GM12878 (cell line): ENCODE measurements at regions of chr5 and their contacts with region 1.

Region 1: GRCh38 chr5:10607666-10608073 is 43.8 kb downstream of the ANKRD33B start:
- DNase-seq: peak; percentile 63
- ATAC-seq: peak; percentile 73
- H3K4me3 ChIP-seq: peak overlapping the region; percentile 16
- H3K27ac ChIP-seq: peak overlapping the region; percentile 87
- H3K4me1 ChIP-seq: peaks cover 56% of the 10 kb centered on the region
- H3K27me3 ChIP-seq: no peaks in the 10 kb centered on the region
- CTCF ChIP-seq: peak; percentile 32 to 52 (median 32); a peak in 4 of 6 replicates
- EP300 ChIP-seq: peak; percentile 58 to 63; a peak in 2 of 4 replicates
- POLR2A ChIP-seq: no peak
- RAD21 ChIP-seq: peak; percentile 51

Region 2: DNA sequence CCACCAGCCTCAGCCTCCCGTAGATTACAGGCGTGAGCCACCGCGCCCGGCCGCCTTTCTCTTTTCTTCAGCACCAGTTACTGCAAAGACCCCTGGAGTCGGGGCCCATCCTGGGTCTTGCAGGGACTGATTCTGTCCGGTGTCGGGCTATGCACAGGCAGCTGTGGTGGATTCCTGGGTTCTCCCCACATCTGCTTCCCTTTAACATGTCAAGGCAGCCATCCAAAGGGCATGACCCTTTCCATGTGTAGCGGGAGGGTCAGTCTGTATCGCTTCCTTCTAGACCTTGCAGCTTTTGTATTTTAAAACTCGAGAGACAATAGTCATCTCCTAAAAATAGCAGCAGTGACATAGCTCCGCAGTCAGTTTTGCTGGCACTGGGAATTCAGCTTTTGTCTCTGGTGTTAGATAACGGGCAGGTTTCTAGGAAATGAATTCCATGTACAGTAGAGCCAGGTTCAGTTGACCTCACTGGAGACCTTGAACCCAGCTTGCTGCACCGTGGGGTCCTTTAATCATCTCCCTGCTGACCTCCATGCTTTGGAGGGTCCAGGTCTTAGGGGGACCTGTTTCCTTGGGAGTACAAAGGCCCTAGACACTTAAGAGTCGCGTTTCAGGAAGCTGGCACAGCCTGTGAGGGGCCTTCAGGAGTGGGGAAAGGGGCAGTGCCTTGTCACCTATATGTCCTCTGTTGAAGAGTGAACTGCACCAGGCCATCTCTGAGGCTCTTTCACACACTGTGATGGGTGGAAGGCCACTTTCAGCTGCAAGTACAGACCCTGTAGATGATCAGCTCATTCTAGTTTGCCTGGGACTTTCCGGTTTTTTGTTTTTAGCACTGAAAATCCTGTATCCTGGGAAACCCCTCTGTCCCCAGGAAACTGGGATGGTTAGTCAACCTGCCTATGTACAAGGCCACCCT is 30.0 kb before region 1 on chr5:
- CTCF ChIA-PET with region 1: interaction called, 25 read pairs
- POLR2A ChIA-PET with region 1: interaction called, 10 read pairs
- RAD21 ChIA-PET with region 1: interaction called, 46 read pairs
- SMC1A ChIA-PET with region 1: interaction called, 25 read pairs
- in situ Hi-C with region 1: no loop called
- intact Hi-C with region 1: loop called (anchors 1 kb)
- DNase-seq: no peak
- ATAC-seq: peak; percentile 68
- H3K4me3 ChIP-seq: peak overlapping the region; percentile 46; the same call in 1 of the 2 replicates
- H3K27ac ChIP-seq: peak overlapping the region; percentile 77
- H3K4me1 ChIP-seq: peaks cover 64% of the 10 kb centered on the region
- H3K27me3 ChIP-seq: no peaks in the 10 kb centered on the region
- CTCF ChIP-seq: no peak
- EP300 ChIP-seq: no peak
- POLR2A ChIP-seq: no peak; the same call in 1 of the 2 replicates
- RAD21 ChIP-seq: no peak

Region 3: GRCh38 chr5:10590226-10590999 is 17.3 kb before region 1 on chr5:
- CTCF ChIA-PET with region 1: interaction called, 4 read pairs
- POLR2A ChIA-PET with region 1: interaction called, 21 read pairs
- RAD21 ChIA-PET with region 1: interaction called, 10 read pairs
- SMC1A ChIA-PET with region 1: interaction called, 19 read pairs
- in situ Hi-C with region 1: no loop called
- intact Hi-C with region 1: no loop called
- DNase-seq: no peak
- ATAC-seq: peak; percentile 27; the same call in 2 of the 3 replicates
- H3K4me3 ChIP-seq: no peak overlapping the region
- H3K27ac ChIP-seq: peak overlapping the region; percentile 28
- H3K4me1 ChIP-seq: peaks cover 79% of the 10 kb centered on the region
- H3K27me3 ChIP-seq: no peaks in the 10 kb centered on the region
- CTCF ChIP-seq: no peak
- EP300 ChIP-seq: no peak
- POLR2A ChIP-seq: no peak
- RAD21 ChIP-seq: no peak

Region 4: DNA sequence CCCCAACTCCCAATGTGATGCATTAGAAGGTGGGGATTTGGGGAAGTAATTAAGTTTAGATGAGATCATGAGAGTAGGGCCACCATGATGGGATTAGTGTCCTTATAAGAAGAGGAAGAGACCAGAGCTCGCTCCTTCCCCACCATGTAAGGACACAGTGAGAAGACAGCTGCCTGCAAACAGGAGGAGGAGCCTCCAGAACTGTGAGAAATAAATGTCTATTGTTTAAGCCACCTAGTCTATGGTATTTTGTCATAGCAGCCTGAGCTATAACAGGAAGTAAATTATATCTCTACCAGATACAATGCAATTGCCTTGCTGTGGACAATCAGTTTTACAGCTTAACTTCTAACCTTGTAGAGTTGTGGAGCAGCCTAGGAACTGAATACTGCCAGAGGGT is 14.2 kb after region 1 on chr5:
- CTCF ChIA-PET with region 1: interaction called, 157 read pairs
- POLR2A ChIA-PET with region 1: interaction called, 20 read pairs
- RAD21 ChIA-PET with region 1: interaction called, 79 read pairs
- SMC1A ChIA-PET with region 1: interaction called, 192 read pairs
- in situ Hi-C with region 1: no loop called
- intact Hi-C with region 1: loop called (anchors 1 kb)
- DNase-seq: no peak
- ATAC-seq: peak; percentile 17; the same call in 2 of the 3 replicates
- H3K4me3 ChIP-seq: no peak overlapping the region
- H3K27ac ChIP-seq: peak overlapping the region; percentile 47
- H3K4me1 ChIP-seq: peaks cover 27% of the 10 kb centered on the region
- H3K27me3 ChIP-seq: no peaks in the 10 kb centered on the region
- CTCF ChIP-seq: no peak
- EP300 ChIP-seq: no peak
- POLR2A ChIP-seq: no peak
- RAD21 ChIP-seq: no peak

Region 5: DNA sequence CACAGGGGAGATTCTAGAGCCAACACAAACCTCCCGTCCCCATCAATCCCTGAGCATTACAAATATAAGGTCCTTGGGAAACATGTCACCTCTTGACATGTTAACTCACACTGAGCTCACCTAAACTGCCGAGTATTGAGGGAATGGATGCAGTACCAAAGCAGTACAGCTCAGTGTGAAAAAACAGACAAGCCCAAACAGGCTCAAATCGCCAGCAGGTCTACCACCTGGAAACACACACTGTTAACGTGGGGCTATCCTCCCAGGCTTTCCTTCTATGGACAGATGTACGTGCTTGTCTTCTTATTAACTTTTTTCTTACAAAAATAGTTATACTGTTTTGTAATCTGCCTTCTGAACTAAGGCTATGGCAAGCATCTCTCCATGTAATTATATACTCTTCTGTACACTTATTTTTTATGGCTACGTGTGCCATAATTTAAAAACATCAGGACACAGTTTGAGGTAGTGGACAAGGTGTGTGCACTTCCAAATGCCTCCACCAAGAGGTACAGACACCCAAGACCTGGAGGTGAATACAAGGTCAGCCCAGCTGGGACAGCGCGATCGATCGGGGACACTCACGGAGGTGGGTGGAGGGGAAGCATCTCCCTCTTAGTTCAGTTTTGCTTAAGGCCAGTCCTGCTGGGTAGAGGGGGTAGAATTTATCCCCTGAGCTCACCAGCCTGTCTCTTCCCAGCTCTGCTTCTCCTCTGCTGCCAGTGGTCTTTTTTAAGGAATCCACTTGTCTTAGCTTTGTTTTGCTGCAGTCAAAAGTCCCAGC is 76.8 kb after region 1 on chr5:
- CTCF ChIA-PET with region 1: interaction called, 15 read pairs
- POLR2A ChIA-PET with region 1: no interaction called
- RAD21 ChIA-PET with region 1: interaction called, 13 read pairs
- SMC1A ChIA-PET with region 1: interaction called, 4 read pairs
- in situ Hi-C with region 1: no loop called
- intact Hi-C with region 1: no loop called
- DNase-seq: no peak
- ATAC-seq: peak; percentile 76
- H3K4me3 ChIP-seq: 0 out of 2 replicates have a peak overlapping the region, but pooled peaks have one; percentile 17
- H3K27ac ChIP-seq: peak overlapping the region; percentile 88
- H3K4me1 ChIP-seq: peaks cover 23% of the 10 kb centered on the region
- H3K27me3 ChIP-seq: no peaks in the 10 kb centered on the region
- CTCF ChIP-seq: no peak
- EP300 ChIP-seq: no peak
- POLR2A ChIP-seq: no peak
- RAD21 ChIP-seq: no peak